Panc1 (cell line): ENCODE measurements at regions of chr1 and their contacts with region 1.

Region 1: DNA sequence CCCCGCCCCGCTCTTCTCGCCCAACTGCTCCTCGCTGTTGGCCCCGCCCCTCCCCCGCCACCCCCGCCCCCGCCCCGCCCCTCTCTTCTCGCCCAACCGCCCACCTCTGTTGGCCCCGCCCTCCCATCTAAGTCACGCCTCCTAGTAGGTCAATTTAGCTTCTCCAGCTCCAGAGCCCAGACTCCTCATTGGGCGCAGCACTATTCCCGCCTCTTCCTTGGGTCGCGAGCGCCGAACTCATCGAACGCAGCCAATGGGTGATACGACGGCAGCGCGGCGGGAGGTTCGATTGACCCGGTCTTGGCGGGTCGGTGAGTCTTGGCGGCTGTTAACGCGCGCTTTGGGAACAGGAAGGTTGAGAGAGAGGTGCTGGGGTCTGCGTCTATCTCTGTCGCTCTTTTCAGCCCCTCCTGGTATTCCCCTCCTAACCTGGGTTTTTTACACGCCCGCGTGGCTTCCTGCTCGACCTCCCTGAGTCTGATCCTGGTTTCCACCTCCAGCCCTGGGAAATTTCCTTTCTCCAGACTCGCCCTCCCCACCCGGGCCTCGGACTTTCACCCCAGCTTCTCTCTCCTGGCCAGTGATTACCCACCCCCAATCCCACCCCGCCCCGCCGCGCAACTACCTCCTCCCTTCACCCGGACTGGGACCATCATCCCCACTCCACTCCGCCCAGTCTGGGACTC is at the start of gene RAD54L:
- DNase-seq: peak; percentile 88
- ATAC-seq: peak; percentile 96
- H3K4me3 ChIP-seq: peak within 1 kb of the TSS; percentile 64 to 91
- H3K27ac ChIP-seq: peak within 1 kb of the TSS; percentile 83
- H3K4me1 ChIP-seq: peaks cover 22% of the 10 kb centered on the region
- H3K27me3 ChIP-seq: no peaks in the 10 kb centered on the region
- CTCF ChIP-seq: no peak
- total RNA-seq, gene RAD54L: 29.4 TPM

Region 2: GRCh38 chr1:45971335-45971734 is 276.2 kb before region 1 on chr1:
- CTCF ChIA-PET with region 1: interaction called, 3 read pairs
- POLR2A ChIA-PET with region 1: interaction called, 17 read pairs
- in situ Hi-C with region 1: no loop called
- intact Hi-C with region 1: no loop called
- DNase-seq: no peak
- ATAC-seq: no peak
- H3K4me3 ChIP-seq: no peak overlapping the region
- H3K27ac ChIP-seq: no peak overlapping the region
- H3K4me1 ChIP-seq: no peaks in the 10 kb centered on the region
- H3K27me3 ChIP-seq: no peaks in the 10 kb centered on the region
- CTCF ChIP-seq: no peak

Region 3: DNA sequence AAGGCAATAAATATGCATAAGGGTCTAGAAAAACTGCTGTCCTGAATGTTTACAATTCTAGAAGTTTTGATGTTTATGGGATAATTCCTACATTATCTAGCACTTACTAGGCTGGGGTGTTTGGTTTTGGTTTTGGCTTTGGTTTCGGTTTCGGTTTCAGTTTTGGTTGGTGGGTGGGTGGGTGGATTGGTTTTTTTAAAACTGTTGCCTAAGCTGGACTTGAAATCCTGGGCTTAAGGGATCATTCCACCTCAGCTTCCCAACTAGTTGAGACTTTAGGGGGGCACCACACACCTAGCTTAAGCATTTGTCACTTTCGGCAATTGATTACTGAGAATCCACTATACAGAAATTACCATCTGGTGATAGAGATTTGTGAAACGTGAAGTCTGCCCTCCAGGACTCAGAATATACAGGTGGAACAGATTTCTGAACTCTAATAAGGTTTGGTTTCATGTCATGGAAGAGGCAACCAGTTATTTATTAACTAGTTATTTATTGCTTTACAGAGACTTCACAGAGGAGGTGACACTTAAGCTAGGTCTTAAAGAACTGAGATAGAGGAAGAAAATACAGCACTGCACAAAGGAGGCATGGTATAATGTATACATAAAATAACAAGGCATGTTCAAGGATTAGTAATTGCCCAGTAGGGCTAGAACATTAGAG is 184.8 kb before region 1 on chr1:
- CTCF ChIA-PET with region 1: no interaction called
- POLR2A ChIA-PET with region 1: no interaction called
- in situ Hi-C with region 1: no loop called
- intact Hi-C with region 1: no loop called
- DNase-seq: no peak
- ATAC-seq: no peak
- H3K4me3 ChIP-seq: peak overlapping the region; percentile 19 to 37
- H3K27ac ChIP-seq: peak overlapping the region; percentile 30; the same call in 1 of the 2 replicates
- H3K4me1 ChIP-seq: no peaks in the 10 kb centered on the region
- H3K27me3 ChIP-seq: no peaks in the 10 kb centered on the region
- CTCF ChIP-seq: no peak

Region 4: DNA sequence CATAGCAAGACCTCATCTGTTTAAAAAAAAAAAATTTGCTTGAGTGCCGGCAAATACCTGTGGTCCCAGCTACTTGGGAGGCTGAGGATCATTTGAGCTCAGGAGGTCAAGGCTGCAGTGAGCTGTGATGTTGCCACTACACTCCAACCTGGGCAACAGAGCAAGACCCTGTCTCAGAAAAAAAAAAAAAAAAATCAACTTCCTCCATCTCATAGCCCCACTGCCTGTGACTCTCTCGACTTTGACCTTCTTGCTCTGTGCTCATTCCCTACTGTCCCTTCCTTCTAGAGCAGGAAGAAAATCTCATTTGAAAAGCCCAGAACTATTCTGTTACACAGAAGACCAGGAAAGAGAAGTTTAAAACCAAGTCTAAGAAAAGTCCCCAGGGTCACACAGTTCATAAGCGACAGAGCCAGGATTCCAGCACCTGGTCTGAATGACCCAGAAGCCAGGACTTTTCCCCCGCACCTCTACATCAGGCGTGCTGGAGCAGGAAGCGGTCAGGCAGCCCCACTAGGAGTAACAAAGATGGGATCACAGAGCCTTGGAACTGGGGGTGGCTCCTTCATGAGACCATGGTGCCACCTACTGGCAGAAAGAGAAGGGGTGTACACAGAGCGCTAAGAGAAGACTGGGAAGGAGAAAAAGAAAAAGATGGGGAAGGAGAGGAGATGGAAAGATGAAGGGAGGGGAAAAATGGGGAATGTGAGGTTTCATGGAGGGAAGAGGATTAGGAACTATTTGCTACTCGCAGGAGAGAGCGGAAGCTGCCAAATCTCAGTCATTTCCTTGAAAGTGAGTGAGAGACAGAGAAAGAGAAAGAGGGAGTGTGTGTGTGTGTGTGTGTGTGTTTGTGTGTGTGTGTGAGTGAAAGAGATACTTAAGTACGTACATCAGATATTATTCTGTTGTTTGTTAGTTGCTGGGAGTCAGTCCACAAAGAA is 68.2 kb before region 1 on chr1:
- CTCF ChIA-PET with region 1: interaction called, 3 read pairs
- POLR2A ChIA-PET with region 1: interaction called, 11 read pairs
- in situ Hi-C with region 1: no loop called
- intact Hi-C with region 1: no loop called
- DNase-seq: peak; percentile 78
- ATAC-seq: peak; percentile 75
- H3K4me3 ChIP-seq: no peak overlapping the region; a peak in 1 of 4 replicates
- H3K27ac ChIP-seq: peak overlapping the region; percentile 40; the same call in 1 of the 2 replicates
- H3K4me1 ChIP-seq: peaks cover 59% of the 10 kb centered on the region
- H3K27me3 ChIP-seq: no peaks in the 10 kb centered on the region
- CTCF ChIP-seq: peak; percentile 92

Region 5: DNA sequence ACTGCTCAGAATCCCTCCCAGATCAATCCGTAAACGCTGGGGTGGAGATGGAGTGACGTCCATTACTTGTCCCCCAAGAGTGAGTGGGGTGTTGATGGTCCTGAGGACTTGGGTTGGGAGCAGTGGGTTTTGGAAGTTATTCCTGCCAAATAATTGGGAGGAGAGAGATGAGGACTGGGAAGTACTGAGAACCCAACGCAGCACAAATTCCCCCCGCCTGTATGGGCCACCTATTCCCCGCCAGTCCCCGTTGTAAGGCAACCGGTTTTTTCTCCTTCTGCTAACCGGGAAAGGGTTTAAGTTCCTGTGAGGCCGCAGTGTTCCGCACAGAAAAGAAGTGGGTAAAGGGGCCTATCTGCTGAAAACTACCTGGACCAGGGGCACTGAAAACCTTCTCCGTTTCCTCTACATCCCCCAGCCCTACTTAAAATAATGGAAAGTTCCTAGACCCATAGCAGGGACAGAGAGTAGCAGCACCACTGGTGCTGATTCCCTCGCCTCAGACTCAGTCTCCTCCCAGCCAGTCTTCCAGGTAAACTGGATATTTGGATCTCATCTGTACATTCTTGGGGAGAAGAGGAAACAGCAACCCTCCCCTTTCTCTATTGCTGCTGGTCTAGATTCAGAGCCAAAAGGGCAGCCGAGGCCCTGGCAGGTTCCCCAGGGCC is 43.7 kb before region 1 on chr1:
- CTCF ChIA-PET with region 1: no interaction called
- POLR2A ChIA-PET with region 1: interaction called, 10 read pairs
- in situ Hi-C with region 1: no loop called
- intact Hi-C with region 1: no loop called
- DNase-seq: no peak
- ATAC-seq: peak; percentile 3; the same call in 1 of the 2 replicates
- H3K4me3 ChIP-seq: peak overlapping the region; percentile 58 to 76
- H3K27ac ChIP-seq: peak overlapping the region; percentile 67
- H3K4me1 ChIP-seq: peaks cover 12% of the 10 kb centered on the region
- H3K27me3 ChIP-seq: no peaks in the 10 kb centered on the region
- CTCF ChIP-seq: no peak